ENCODE measurements at regions of chr1 and their contacts with region 1.

Region 1: DNA sequence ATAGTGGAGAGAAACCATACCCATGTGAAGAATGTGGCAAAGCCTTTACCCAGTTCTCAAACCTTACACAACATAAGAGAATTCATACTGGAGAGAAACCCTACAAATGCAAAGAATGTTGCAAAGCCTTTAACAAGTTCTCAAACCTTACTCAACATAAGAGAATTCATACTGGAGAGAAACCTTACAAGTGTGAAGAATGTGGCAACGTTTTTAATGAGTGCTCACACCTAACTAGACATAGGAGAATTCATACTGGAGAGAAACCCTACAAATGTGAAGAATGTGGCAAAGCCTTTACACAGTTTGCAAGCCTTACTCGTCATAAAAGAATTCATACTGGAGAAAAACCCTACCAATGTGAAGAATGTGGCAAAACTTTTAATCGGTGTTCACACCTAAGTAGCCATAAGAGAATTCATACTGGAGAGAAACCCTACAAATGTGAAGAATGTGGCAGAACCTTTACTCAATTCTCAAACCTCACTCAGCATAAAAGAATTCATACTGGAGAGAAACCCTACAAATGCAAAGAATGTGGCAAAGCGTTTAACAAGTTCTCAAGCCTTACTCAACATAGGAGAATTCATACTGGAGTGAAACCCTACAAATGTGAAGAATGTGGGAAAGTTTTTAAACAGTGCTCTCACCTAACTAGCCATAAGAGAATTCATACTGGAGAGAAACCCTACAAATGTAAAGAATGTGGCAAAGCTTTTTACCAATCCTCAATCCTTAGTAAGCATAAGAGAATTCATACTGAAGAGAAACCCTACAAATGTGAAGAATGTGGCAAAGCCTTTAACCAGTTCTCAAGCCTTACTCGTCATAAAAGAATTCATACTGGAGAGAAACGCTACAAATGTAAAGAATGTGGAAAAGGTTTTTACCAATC is 80.0 kb downstream of the JMJD4 start:
- DNase-seq: no peak
- ATAC-seq: no peak
- H3K4me3 Mint-ChIP-seq: no peak overlapping the region
- H3K27ac Mint-ChIP-seq: no peak overlapping the region
- H3K4me1 Mint-ChIP-seq: no peaks in the 10 kb centered on the region
- H3K27me3 Mint-ChIP-seq: no peaks in the 10 kb centered on the region
- CTCF ChIP-seq: no peak

Region 2: DNA sequence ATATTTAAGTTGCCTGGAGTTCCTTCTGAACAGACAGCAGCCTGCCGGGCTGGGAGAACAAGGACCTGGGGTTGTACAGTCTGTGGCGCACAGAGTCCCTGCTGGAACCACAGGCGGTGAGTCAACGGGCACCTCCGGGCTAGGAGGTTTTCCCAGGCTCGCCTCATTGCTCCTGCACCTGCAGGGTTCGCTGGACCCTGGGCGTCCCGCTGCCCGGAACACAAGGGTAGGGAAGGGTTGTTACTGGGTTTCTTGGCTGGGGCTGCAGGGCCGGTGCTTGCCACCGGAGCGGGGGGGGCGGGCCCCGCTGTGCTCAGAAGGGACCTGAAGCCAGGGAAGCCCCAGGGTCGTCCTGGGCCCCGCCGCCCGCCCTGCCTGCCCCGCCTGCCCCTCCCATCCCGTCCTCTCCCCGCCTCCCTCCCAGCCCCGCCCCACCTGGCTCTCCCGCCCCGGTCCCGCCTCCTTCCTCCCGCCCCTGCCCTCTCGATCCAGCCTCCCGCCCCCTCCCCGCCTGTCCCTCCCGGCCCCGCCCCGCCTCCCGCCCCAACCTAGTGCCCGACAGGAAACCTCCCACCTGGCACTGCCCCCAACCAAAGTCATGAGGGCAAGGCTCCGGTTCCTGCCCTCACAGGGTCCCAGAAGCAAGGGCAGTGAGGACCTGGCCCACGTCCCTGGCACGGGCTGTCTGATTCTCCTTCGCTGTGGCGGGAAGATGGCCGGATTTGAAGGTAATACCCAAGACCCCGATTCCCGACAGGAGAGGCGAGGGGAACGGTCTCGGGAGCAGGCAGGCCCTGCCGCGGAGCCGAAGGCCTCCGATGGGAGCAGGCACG is 73.2 kb after region 1 on chr1:
- CTCF ChIA-PET with region 1: no interaction called
- POLR2A ChIA-PET with region 1: no interaction called
- intact Hi-C with region 1: loop called (anchors 5 kb)
- DNase-seq: peak; percentile 47
- ATAC-seq: peak; percentile 67
- H3K4me3 Mint-ChIP-seq: peak overlapping the region; percentile 80
- H3K27ac Mint-ChIP-seq: peak overlapping the region; percentile 76
- H3K4me1 Mint-ChIP-seq: peaks cover 38% of the 10 kb centered on the region
- H3K27me3 Mint-ChIP-seq: peaks cover 2% of the 10 kb centered on the region
- CTCF ChIP-seq: no peak